Activated B cell treated with CpG ODN at 0.5 μM for 24 hours (primary cell): ENCODE measurements at regions of chr4 and their contacts with region 1.

Region 1: DNA sequence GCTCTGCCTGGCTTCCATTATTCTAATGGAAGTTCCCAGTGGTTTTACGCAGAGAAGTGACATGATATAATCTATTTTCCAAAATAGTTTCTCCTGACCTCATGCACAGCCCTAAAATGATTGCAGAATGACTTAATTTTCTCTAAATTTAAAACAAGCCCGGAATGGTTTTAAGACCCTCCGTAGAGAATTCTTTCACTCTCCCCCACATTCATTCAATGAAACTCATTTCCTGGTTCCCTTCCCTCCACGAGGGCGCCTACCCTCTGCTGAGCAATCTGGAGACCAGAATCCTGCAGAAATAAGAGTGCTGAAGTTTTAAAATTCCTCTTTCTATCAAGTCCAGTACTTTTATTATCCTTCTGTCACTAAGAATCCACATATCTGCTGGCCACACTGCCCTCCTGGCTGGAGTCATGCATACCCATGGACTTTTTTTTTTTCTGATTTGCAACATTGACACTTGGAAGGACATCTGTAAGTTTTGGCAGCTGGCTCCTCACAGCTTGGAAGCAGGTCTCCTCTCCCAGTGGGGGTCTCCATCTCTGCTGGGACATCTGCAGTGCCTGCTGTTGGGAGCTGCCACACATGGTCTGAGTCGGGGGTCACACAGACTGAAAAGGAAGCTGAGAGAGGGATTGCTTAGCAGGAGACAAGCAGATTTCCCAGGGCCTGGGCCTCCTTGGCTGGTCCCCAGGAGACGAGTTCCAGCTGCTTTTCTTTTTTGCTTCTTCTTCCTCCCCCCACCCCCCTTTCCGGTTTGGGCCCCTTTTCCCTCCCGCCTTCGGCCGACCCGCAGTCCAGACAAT is 86.1 kb downstream of the SOWAHB start:
- DNase-seq: no peak
- ATAC-seq: no peak
- H3K4me3 Mint-ChIP-seq: no peak overlapping the region
- H3K27ac Mint-ChIP-seq: no peak overlapping the region
- H3K4me1 Mint-ChIP-seq: no peaks in the 10 kb centered on the region
- H3K27me3 Mint-ChIP-seq: peaks cover 3% of the 10 kb centered on the region
- CTCF ChIP-seq: no peak

Region 2: DNA sequence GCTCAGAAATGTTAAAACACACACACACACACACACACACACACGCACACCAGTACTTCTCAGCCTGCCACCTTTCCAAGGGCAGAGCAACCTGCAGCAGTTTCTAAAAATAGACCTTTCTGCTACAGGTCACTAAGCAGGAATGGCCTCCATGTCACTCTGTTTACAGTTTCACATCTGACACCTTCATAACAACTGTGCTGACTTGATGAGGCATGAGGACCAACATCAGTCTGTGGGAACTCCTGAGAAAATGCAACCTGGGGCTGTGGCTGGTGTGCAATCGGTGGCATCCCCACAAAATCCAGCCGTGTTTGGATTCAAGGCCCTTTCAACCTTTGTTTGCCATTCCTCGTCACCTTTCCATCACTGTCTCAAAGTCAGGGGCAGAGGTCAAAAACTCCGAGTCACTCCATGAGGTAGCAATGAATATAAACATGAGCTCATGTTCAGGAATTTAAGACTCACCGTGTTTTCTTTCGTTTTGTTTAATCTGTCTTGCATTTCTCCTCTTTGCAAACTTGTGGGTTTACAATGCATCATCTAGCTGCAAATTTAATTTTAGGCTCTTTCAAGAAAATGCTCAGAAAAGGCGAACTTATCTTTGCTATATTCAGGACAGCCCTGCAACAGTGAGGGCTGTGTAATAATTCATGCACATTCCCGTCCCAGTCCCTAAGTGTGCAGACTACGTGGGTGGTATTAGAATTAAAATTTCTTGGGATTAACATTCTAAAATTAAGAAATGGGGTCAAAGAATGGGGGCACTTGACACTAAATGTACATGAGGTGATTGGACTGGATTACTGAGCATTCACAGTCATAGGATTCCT is 241.5 kb before region 1 on chr4:
- CTCF ChIA-PET with region 1: no interaction called
- POLR2A ChIA-PET with region 1: no interaction called
- intact Hi-C with region 1: no loop called
- DNase-seq: no peak
- ATAC-seq: no peak
- H3K4me3 Mint-ChIP-seq: no peak overlapping the region
- H3K27ac Mint-ChIP-seq: no peak overlapping the region
- H3K4me1 Mint-ChIP-seq: no peaks in the 10 kb centered on the region
- H3K27me3 Mint-ChIP-seq: peaks cover 12% of the 10 kb centered on the region
- CTCF ChIP-seq: no peak

Region 3: GRCh38 chr4:76626686-76627465 is 184.9 kb before region 1 on chr4:
- CTCF ChIA-PET with region 1: no interaction called
- POLR2A ChIA-PET with region 1: interaction called, 11 read pairs
- intact Hi-C with region 1: no loop called
- DNase-seq: no peak
- ATAC-seq: no peak
- H3K4me3 Mint-ChIP-seq: no peak overlapping the region
- H3K27ac Mint-ChIP-seq: no peak overlapping the region
- H3K4me1 Mint-ChIP-seq: no peaks in the 10 kb centered on the region
- H3K27me3 Mint-ChIP-seq: peaks cover 22% of the 10 kb centered on the region
- CTCF ChIP-seq: no peak